ENCODE measurements at regions of chr2 and their contacts with region 1.

Region 1: GRCh38 chr2:42183775-42184174 is 14.6 kb downstream of the EML4 start:
- DNase-seq: no peak
- ATAC-seq: no peak
- H3K4me3 ChIP-seq: no peak overlapping the region
- H3K27ac ChIP-seq: no peak overlapping the region
- H3K4me1 ChIP-seq: peaks cover 0 to 54% (median 23%) of the 10 kb centered on the region in 9 donors
- H3K27me3 ChIP-seq: no peaks in the 10 kb centered on the region
- CTCF ChIP-seq: no peak

Region 2: DNA sequence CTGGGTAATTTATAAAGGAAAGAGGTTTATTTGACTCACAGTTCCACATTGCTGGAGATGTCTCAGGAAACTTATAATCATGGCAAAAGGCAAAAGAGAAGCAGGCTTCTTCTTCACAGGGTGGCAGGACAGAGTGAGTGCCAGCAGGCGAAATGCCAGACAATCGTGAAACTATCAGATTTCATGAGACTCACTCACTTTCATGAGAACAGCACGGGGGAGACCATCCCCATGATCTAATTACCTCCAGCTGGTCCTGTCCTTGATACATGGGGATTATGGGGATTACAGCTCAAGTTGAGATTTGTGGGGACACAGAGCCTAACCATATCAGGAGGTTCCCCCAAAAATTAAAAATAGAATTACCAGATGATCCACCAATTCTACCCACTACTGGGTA is 1056.4 kb before region 1 on chr2:
- intact Hi-C with region 1: loop called in 1 of 10 experiments (anchors 5 kb)
- DNase-seq: no peak
- ATAC-seq: no peak
- H3K4me3 ChIP-seq: no peak overlapping the region
- H3K27ac ChIP-seq: no peak overlapping the region
- H3K4me1 ChIP-seq: peaks cover 0 to 5% (median 0%) of the 10 kb centered on the region in 9 donors
- H3K27me3 ChIP-seq: no peaks in the 10 kb centered on the region
- CTCF ChIP-seq: no peak